Endothelial cell of umbilical vein (primary cell): ENCODE measurements at regions of chr11 and their contacts with region 1.

Region 1: DNA sequence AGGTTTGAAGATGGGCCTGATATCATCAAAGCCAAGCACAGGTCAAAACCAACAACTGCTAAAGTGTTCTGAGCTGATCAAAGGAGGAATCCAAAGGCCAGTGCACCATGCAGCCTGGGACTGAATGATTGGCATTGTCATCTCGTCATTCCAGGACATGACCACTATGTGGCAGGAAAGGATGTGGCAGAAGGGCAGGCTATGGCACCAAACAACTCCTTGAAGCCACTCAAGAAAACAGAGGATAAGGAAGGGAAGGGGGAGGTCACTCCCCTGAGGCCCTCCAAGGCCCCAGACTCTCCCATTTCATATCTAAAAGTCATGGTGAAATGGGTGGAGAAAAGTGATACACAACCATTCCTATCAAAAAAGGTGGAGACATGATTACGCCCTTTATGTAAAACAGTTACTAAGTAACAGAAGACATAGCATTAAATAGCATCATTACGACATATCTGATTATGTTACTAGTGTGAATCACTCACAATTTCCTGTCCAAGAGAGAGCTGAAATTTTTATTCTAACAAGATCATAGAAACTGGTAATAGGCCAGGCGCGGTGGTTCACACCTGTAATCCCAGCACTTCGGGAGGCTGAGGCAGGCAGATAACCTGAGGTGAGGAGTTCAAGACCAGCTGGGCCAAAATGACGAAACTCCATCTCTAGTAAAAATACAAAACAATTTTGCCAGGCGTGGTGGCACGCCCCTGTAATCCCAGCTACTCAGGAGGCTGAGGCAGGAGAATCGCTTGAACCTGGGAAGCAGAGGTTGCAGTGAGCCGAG is 49.3 kb downstream of the AHNAK start:
- DNase-seq: peak; percentile 68
- H3K4me3 ChIP-seq: no peak overlapping the region
- H3K27ac ChIP-seq: peak overlapping the region; percentile 58
- H3K4me1 ChIP-seq: peaks cover 25% of the 10 kb centered on the region
- H3K27me3 ChIP-seq: no peaks in the 10 kb centered on the region
- CTCF ChIP-seq: peak; percentile 27 to 33
- POLR2A ChIP-seq: no peak

Region 2: DNA sequence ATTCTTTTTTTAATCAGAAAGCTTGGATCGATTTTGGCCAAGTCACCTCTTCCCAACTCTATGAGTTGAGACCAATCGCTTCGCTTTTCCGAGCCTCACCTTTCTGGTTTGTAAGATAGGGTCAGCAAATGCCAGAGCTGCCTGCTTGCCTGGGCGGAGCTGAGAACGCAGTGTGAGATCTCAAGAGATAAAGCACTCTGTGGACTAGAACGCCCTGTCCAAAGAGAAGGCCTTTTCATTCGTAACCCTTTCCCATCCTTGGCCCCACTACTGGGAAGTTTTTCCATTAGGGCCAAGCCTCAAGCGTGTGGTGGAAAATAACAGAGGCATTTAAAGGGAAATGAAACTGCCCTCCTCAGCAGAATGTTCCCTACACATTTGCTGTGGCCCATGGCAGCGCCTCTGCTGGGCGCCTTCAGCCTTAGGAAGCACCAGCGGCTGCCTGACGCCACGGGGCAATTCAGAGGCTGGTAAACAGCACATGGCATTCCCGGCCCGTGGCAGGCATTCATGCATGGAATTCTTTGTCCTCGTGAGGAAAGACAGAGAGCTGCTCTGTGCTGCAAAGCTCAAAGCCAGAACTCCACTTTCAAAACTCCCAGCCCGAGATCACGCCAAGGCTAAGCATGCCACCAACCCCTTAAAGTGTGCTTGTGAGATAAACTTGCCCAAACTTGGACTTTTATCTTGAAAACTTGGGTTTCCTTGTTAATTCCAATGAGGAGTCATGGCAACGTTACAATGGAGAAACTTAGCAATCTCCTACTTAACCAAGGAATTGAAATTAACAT is 11.1 kb after region 1 on chr11:
- CTCF ChIA-PET with region 1: interaction called, 8 read pairs
- POLR2A ChIA-PET with region 1: no interaction called
- dilution Hi-C with region 1: no loop called
- intact Hi-C with region 1: loop called (anchors 1 kb)
- DNase-seq: peak; percentile 86
- H3K4me3 ChIP-seq: peak overlapping the region in 1 of 3 experiments; percentile 16
- H3K27ac ChIP-seq: no peak overlapping the region
- H3K4me1 ChIP-seq: peaks cover 3% of the 10 kb centered on the region
- H3K27me3 ChIP-seq: no peaks in the 10 kb centered on the region
- CTCF ChIP-seq: peak; percentile 69 to 81
- POLR2A ChIP-seq: no peak

Region 3: GRCh38 chr11:62726915-62727763 is 229.8 kb after region 1 on chr11 and contains the start of gene HNRNPUL2:
- CTCF ChIA-PET with region 1: no interaction called
- POLR2A ChIA-PET with region 1: no interaction called
- dilution Hi-C with region 1: no loop called
- intact Hi-C with region 1: no loop called
- DNase-seq: peak; percentile 99
- H3K4me3 ChIP-seq: peak within 1 kb of the TSS; percentile 71 to 99 (median 94)
- H3K27ac ChIP-seq: peak within 1 kb of the TSS; percentile 67
- H3K4me1 ChIP-seq: peaks cover 15% of the 10 kb centered on the region
- H3K27me3 ChIP-seq: no peaks in the 10 kb centered on the region
- CTCF ChIP-seq: no peak
- POLR2A ChIP-seq: peak; percentile 92
- total RNA-seq, gene HNRNPUL2: 53.4 and 56.2 TPM in 2 replicates